Activated T-helper 1 cell treated with anti-CD3 and anti-CD28 coated beads, Interleukin-12 subunit alpha, Interleukin-12 subunit beta, Interleukin-2, Interleukin-4 antibody, amounts not matched to agents 30 ng/mL and 10 ng/mL and 1 ng/mL, durations not matched to agents 14 hours and 24 hours and 36 hours (primary cell): ENCODE measurements at regions of chr17 and their contacts with region 1.

Region 1: GRCh38 chr17:81666342-81667191 is at the starts of genes CCDC137 and OXLD1:
- DNase-seq: peak; percentile 93
- H3K4me3 Mint-ChIP-seq: peak within 1 kb of the TSS; percentile 99
- H3K27ac Mint-ChIP-seq: peak within 1 kb of the TSS; percentile 98
- H3K4me1 Mint-ChIP-seq: peaks cover 32% of the 10 kb centered on the region
- H3K27me3 Mint-ChIP-seq: no peaks in the 10 kb centered on the region
- total RNA-seq, gene CCDC137: 59.3 and 62.1 TPM in 2 replicates
- total RNA-seq, gene OXLD1: 54.3 and 57.5 TPM in 2 replicates

Region 2: DNA sequence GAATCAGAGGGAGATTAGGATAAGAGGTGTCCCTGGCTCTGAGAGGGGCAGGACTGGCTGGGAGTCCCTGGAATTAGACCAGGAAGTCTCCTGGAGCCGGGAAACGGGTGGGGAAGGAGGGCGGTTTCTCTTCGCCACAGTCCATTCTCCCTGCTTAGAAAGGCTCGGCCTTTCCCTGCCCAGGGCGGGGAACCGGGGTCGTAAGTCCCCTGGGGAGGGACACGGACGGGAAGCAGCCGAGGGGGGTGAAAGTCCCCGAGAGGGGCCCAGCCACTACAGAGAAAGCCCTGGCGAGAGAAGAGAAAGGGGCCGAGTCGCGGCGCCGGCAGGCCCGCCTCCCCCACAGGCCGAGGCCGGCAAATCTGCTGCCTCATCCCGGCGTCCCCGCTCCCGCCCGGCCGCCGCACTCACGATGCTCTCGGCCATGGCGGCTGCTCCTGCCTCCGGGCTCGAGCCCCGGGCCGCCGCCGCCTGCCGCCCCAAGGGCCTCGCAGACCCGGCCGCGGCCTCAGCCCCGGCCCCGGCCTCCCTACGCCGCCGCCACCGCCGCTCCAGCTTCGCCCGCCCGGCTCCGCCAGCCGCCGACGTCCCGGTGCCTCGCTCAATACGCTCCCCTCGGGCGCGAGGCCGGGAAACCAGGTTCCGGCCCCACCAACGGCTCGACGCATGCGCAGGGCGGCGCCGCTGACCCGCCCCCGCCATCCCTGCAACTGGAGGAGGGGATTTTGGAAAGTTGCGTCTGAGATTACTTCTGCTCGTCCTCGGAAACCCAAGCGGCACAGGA is 29.9 kb before region 1 on chr17 and contains the starts of genes NPLOC4 and TSPAN10:
- intact Hi-C with region 1: loop called (anchors 1 kb)
- DNase-seq: peak; percentile 81
- H3K4me3 Mint-ChIP-seq: peak within 1 kb of the TSS; percentile 92
- H3K27ac Mint-ChIP-seq: peak within 1 kb of the TSS; percentile 80
- H3K4me1 Mint-ChIP-seq: peaks cover 16% of the 10 kb centered on the region
- H3K27me3 Mint-ChIP-seq: peaks cover 5% of the 10 kb centered on the region
- total RNA-seq, gene NPLOC4: 138 and 157 TPM in 2 replicates
- total RNA-seq, gene TSPAN10: 0.21 and 0.66 TPM in 2 replicates

Region 3: GRCh38 chr17:81702971-81703746 is 36.6 kb after region 1 on chr17 and contains the start of gene MRPL12:
- intact Hi-C with region 1: loop called (anchors 1 kb)
- DNase-seq: peak; percentile 87
- H3K4me3 Mint-ChIP-seq: peak within 1 kb of the TSS; percentile 98
- H3K27ac Mint-ChIP-seq: peak within 1 kb of the TSS; percentile 97
- H3K4me1 Mint-ChIP-seq: peaks cover 18% of the 10 kb centered on the region
- H3K27me3 Mint-ChIP-seq: no peaks in the 10 kb centered on the region
- total RNA-seq, gene MRPL12: 232 TPM in 2 replicates

Region 4: GRCh38 chr17:81910840-81911276 is 244.3 kb after region 1 on chr17:
- intact Hi-C with region 1: no loop called
- DNase-seq: no peak
- H3K4me3 Mint-ChIP-seq: peak overlapping the region; percentile 88
- H3K27ac Mint-ChIP-seq: peak overlapping the region; percentile 48
- H3K4me1 Mint-ChIP-seq: peaks cover 21% of the 10 kb centered on the region
- H3K27me3 Mint-ChIP-seq: no peaks in the 10 kb centered on the region